ENCODE measurements at regions of chr12 and their contacts with region 1.

Region 1: DNA sequence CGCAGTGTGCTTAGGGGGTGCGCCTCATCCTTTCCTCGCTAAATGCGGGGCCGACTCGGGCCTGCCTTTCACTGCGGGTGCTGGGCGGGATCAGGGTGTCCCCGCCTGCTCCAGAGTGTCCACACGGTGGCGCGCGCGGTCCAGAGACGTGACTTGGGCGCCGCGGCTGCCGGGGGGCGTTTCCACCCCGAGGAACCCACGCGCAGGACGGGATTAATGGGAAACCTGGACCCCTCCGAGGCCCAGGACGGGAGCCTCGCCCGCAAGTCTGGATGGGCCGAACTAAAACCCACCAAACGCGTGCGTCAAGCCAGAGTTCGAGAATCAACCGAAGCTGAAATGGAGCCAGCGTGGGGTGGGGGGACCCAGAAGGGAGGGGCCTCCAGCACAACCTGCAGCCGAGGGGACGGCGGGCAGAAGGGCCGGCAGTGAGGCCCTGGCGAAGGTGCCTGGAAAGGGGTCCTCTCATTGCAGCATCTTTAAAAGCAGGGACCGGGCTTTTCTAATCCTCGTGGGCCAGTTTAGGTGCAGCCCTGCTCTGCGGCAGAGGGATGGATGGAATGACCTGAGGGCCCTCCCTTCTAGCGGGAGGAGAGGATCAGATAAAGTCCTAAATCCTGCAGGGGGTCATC is 93.3 kb downstream of the NINJ2 start:
- DNase-seq: peak; percentile 95
- ATAC-seq: peak; percentile 90

Region 2: DNA sequence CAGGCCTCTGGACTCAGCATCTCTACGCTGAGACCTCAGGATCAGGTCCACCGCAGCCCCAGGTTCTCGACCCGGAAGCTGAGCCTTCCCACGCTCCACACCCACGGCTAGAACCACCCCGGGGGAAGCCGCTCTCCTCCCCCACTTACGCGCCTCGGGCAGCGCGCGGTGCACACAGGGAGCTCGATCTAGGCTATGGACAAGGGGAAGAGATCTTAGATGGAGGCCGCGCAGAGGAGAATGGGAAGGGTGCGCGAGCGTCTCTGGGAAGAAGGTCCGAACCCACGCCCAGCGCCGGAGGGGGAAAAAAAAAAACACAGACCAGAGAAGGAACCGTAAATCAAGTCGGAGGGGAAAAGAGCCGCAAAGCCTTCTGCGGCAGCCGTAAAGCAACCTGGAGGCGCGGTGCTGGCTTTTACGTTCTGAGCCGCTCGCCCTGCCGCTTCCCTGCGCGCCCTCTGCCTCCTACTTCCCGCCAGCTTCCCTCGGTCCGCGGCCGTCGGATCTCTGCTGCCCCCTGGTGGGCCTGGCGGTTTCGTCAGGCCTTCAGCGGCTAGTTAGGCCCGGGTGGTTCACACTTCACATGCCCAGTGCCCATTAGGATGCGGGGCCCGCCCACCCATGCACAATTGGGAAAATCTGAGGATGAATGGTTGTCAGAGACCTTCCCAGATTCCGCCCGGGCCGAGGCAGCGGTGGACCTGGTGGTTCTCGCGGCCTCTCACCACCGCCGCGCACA is 379.7 kb after region 1 on chr12 and contains the start of gene RAD52:
- intact Hi-C with region 1: loop called (anchors 10 kb)
- DNase-seq: peak; percentile 99
- ATAC-seq: peak; percentile 98
- total RNA-seq, gene RAD52: 25.6 TPM

Region 3: GRCh38 chr12:1583421-1584078 is 1013.6 kb after region 1 on chr12:
- intact Hi-C with region 1: loop called (anchors 5 kb)
- DNase-seq: peak; percentile 78
- ATAC-seq: peak; percentile 89

Region 4: DNA sequence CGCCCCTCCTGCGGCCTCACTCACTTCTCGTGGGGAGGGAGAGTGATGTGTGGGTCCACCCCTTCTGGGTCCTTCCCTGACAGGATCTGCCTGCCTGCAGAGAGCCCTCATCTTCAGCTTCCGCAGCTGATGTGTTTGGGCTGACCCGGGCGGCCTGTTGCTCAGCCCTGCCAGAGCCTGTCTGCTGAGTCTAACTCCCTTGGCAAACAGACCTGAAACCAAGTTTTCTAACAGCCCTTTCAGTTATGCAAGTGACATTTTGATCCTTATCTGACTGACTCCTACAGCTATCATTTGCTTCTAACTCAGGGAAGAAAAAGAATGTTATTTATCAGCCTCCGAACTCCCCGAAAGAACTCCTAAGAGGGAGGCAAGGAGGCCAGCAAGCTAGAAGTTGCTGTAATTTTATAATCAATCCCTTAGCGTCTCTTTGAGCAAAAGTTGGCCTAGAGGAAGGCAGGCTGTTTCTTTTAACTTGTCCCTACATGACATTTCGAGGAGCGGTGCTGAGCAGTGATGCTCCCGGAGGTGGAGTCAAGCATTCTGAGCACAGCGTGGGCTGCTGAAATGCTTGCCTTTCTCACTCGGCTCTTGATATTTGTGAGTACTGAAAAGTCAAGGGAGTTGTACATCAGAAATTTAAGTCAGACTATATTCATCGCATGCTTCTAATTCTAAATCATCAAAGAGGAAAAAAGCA is 1380.0 kb after region 1 on chr12:
- intact Hi-C with region 1: no loop called
- DNase-seq: no peak
- ATAC-seq: peak; percentile 90

Region 5: GRCh38 chr12:2295941-2296461 is 1726.1 kb after region 1 on chr12:
- intact Hi-C with region 1: no loop called
- DNase-seq: peak; percentile 10
- ATAC-seq: no peak

Measured in sciatic nerve (tissue), 2 donors.